ENCODE measurements at regions of chr19 and their contacts with region 1.

Region 1: DNA sequence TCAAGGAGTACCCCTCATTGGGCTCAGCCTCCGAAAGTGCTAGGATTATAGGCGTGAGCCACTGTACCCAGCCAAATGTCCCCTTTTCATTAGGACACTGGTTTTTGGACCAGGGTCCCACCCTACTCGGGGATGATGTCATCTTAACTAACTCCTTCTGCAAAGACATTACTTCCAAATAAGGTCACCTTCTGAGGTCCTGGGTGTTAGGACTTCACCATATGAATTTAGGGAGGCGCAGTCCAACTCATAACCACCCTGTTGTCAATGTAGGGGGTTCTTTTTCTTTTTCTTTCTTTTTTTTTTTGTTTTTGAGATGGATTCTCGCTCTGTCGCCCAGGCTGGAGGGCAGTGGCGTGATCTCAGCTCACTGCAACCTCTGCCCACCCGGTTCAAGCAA is 32.7 kb upstream of the NFIC start:
- DNase-seq: no peak
- H3K27ac ChIP-seq: no peak overlapping the region
- CTCF ChIP-seq: no peak

Region 2: GRCh38 chr19:4108767-4109625 is 775.3 kb after region 1 on chr19:
- CTCF ChIA-PET with region 1: interaction called, 10 read pairs
- POLR2A ChIA-PET with region 1: no interaction called
- DNase-seq: no peak
- H3K27ac ChIP-seq: no peak overlapping the region; the same call in 1 of the 2 replicates
- CTCF ChIP-seq: no peak

Measured in RWPE1 (cell line).